ENCODE measurements at regions of chr12 and their contacts with region 1.

Region 1: GRCh38 chr12:53675651-53676453 is at the start of gene ATP5MC2:
- DNase-seq: peak; percentile 98 to 100
- ATAC-seq: peak; percentile 96
- H3K4me3 ChIP-seq: peak within 1 kb of the TSS; percentile 70
- H3K27ac ChIP-seq: peak within 1 kb of the TSS; percentile 91 to 94
- H3K4me1 ChIP-seq: peaks cover 19% of the 10 kb centered on the region; the same call in 2 of the 3 replicates
- CTCF ChIP-seq: peak; percentile 99
- EP300 ChIP-seq: no peak
- POLR2A ChIP-seq: peak; percentile 92
- RAD21 ChIP-seq: peak; percentile 91 to 94
- polyA plus RNA-seq, gene ATP5MC2: 402 and 678 TPM in 2 replicates

Region 2: GRCh38 chr12:53180220-53180930 is 495.5 kb before region 1 on chr12 and contains the starts of genes CSAD and ZNF740:
- CTCF ChIA-PET with region 1: no interaction called
- POLR2A ChIA-PET with region 1: no interaction called
- DNase-seq: peak; percentile 98 to 99
- ATAC-seq: peak; percentile 97 to 98
- H3K4me3 ChIP-seq: peak within 1 kb of the TSS; percentile 76
- H3K27ac ChIP-seq: peak within 1 kb of the TSS; percentile 92 to 93
- H3K4me1 ChIP-seq: peaks cover 39% of the 10 kb centered on the region
- CTCF ChIP-seq: no peak
- EP300 ChIP-seq: no peak; a peak in 1 of 5 replicates
- POLR2A ChIP-seq: peak; percentile 90
- RAD21 ChIP-seq: 0 out of 5 replicates have a peak, but pooled peaks of 1 of the 2 experiments have one; percentile 14
- polyA plus RNA-seq, gene CSAD: 16.5 and 19.2 TPM in 2 replicates
- polyA plus RNA-seq, gene ZNF740: 28.8 and 32.9 TPM in 2 replicates

Region 3: DNA sequence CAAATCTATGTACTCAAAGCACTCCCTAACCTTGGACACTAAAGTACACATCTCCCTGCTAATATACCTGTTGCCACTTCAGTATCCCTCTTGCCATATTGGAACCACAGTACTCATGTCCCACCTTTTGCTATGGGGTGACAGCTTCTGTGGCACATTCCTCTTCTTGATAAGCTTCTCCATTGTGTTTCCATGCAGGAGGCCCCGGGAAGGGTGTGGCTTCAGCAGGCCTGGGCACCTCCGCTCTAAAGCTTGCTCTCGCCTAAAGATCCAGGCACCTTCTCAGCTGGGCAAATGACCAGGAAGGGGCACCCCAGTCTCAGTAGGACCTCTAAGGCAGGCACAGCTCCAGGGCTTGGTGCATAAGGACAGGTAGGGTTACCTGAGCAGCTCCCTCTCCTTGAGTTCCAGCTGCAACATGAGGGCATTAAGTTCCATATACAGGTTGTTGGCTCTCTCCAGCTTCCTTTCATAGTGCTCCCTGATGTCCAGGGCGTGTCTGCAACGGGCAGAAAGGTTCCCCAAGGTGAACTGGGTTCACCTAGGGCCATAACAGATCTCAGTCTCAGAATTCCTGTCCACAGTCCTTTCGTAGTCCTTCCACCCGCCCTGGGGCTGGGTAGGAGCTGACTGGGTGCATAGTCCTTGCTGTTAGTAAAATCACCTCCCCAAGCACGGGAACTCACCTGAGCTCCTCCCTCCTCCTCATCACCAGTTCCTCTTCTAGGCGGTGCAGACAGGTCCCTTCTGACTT is 192.4 kb before region 1 on chr12:
- CTCF ChIA-PET with region 1: no interaction called
- POLR2A ChIA-PET with region 1: no interaction called
- DNase-seq: no peak
- ATAC-seq: peak; percentile 0 to 2; a peak in 3 of 6 replicates
- H3K4me3 ChIP-seq: no peak overlapping the region
- H3K27ac ChIP-seq: no peak overlapping the region
- H3K4me1 ChIP-seq: peaks cover 24% of the 10 kb centered on the region
- CTCF ChIP-seq: no peak
- EP300 ChIP-seq: no peak
- POLR2A ChIP-seq: no peak
- RAD21 ChIP-seq: no peak

Region 4: DNA sequence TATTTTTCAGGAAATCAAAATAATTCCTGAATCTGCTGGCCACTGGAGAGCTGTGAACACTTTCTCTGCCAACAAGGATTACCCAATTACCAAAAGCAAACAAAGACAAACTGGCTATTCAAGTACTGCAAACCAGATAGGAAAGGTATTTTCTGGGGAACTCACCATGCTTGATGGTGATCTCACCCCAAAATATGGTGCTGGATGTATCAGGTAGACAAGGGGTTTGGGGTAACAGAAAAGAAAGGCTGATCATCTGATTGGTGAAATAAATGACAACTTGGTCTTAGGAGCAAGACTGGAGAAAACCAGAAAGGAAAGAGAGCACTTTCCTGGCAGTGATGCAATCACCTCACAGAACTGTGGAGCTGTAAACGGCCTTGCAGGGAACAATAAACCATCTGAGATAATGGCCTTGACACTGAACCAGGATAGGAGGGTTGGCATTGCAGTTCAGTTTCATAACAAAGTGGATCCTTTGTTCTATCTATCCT is 137.6 kb before region 1 on chr12:
- CTCF ChIA-PET with region 1: interaction called, 148 read pairs
- POLR2A ChIA-PET with region 1: interaction called, 43 read pairs
- DNase-seq: peak in 1 of 2 experiments; percentile 42
- ATAC-seq: peak; percentile 62 to 65; a peak in 4 of 6 replicates
- H3K4me3 ChIP-seq: no peak overlapping the region
- H3K27ac ChIP-seq: peak overlapping the region; percentile 52 to 68; a peak in 5 of 6 replicates
- H3K4me1 ChIP-seq: peaks cover 15% of the 10 kb centered on the region
- CTCF ChIP-seq: no peak
- EP300 ChIP-seq: no peak
- POLR2A ChIP-seq: no peak
- RAD21 ChIP-seq: no peak

Region 5: DNA sequence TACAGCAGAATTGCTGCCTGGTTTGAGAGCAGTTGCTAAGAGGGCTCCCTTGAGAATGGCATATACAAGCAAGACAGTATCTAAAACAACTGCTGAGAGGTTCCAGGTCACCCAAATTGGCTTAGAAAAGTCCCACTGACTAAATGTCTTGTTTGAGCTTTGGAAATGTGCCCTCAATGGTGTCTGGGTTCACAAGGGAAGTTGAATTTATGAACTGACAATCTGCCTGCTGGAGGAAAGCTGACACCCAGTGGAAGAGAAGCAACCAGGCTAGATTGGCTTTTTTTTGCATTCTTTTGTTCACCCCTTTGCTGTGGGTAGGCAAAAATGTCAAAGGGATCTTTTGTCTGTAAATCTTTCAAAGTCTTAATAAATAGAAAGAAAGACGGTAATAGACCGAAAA is 124.0 kb before region 1 on chr12:
- CTCF ChIA-PET with region 1: interaction called, 148 read pairs
- POLR2A ChIA-PET with region 1: interaction called, 4 read pairs
- DNase-seq: no peak
- ATAC-seq: peak in 1 of 2 experiments; percentile 24; a peak in 1 of 6 replicates
- H3K4me3 ChIP-seq: no peak overlapping the region
- H3K27ac ChIP-seq: no peak overlapping the region
- H3K4me1 ChIP-seq: 0 out of 3 replicates have a peak, but pooled peaks cover 2% of the 10 kb centered on the region
- CTCF ChIP-seq: no peak
- EP300 ChIP-seq: no peak
- POLR2A ChIP-seq: no peak
- RAD21 ChIP-seq: no peak

Region 6: DNA sequence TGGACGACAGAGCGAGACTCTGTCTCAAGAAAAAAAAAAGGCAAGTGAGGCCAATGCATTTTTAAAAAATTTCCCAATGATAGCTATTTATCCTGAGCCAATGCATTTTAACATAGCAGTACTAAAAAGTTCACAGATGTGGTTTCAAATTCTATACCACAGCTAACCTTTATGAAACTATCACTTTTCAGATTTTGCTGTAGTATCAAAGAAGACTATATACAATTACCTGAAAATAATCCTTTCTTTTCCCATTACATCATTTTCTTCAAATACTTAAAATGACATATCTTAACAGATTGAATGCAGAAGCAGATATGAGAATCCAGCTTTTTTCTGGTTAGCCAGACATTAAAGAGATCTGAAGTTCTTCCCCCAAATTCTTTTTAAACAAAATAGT is 62.9 kb before region 1 on chr12:
- CTCF ChIA-PET with region 1: interaction called, 12 read pairs
- POLR2A ChIA-PET with region 1: no interaction called
- DNase-seq: no peak
- ATAC-seq: no peak
- H3K4me3 ChIP-seq: no peak overlapping the region
- H3K27ac ChIP-seq: no peak overlapping the region
- H3K4me1 ChIP-seq: peaks cover 10% of the 10 kb centered on the region; the same call in 1 of the 3 replicates
- CTCF ChIP-seq: no peak
- EP300 ChIP-seq: no peak
- POLR2A ChIP-seq: no peak
- RAD21 ChIP-seq: no peak

Region 7: GRCh38 chr12:53625946-53626701 is 49.7 kb before region 1 on chr12 and contains the start of gene ATF7:
- CTCF ChIA-PET with region 1: interaction called, 16 read pairs
- POLR2A ChIA-PET with region 1: interaction called, 14 read pairs
- DNase-seq: peak; percentile 97 to 99
- ATAC-seq: peak; percentile 98
- H3K4me3 ChIP-seq: peak within 1 kb of the TSS; percentile 67
- H3K27ac ChIP-seq: peak within 1 kb of the TSS; percentile 93 to 94
- H3K4me1 ChIP-seq: peaks cover 36% of the 10 kb centered on the region
- CTCF ChIP-seq: no peak
- EP300 ChIP-seq: no peak
- POLR2A ChIP-seq: peak; percentile 69
- RAD21 ChIP-seq: no peak; a peak in 2 of 5 replicates
- polyA plus RNA-seq, gene ATF7: 38.7 and 38.9 TPM in 2 replicates

Region 8: DNA sequence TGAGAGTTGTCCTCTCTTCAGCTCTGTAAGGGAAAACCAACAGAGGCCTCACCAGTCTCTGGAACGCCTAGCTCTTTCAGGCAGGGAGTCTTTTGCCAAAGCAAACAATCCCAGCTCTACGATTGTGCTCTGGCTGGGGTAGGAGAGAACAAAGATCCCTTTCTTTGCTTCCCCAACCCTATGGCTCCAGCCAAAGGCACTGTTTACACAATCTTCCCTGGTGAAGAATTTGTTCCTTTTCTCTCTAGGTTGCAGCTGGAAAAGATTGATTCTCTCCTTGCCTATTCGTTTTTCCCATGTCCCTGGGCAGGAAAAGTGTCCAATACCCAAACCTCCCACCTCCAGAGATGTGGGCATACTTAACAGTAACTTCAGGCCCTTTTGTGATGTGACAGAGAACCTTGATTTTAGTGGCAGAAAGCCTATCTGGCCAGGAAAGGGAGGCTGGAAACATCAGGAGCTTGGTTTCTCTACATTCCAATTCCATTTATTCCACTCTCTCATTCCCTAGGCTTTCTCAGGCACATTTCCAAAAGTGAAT is 16.8 kb before region 1 on chr12:
- CTCF ChIA-PET with region 1: interaction called, 9 read pairs
- POLR2A ChIA-PET with region 1: interaction called, 16 read pairs
- DNase-seq: peak; percentile 25 to 81
- ATAC-seq: peak; percentile 85 to 92
- H3K4me3 ChIP-seq: peak overlapping the region; percentile 19; the same call in 1 of the 3 replicates
- H3K27ac ChIP-seq: peak overlapping the region; percentile 85 to 86
- H3K4me1 ChIP-seq: peaks cover 36% of the 10 kb centered on the region
- CTCF ChIP-seq: no peak
- EP300 ChIP-seq: no peak
- POLR2A ChIP-seq: no peak
- RAD21 ChIP-seq: no peak

Region 9: GRCh38 chr12:53746592-53747092 is 70.8 kb after region 1 on chr12:
- CTCF ChIA-PET with region 1: interaction called, 13 read pairs
- POLR2A ChIA-PET with region 1: no interaction called
- DNase-seq: peak; percentile 88 to 91
- ATAC-seq: peak; percentile 92 to 95
- H3K4me3 ChIP-seq: no peak overlapping the region
- H3K27ac ChIP-seq: peak overlapping the region in 1 of 2 experiments; percentile 49; a peak in 1 of 6 replicates
- H3K4me1 ChIP-seq: no peaks in the 10 kb centered on the region
- CTCF ChIP-seq: peak; percentile 100
- EP300 ChIP-seq: no peak
- POLR2A ChIP-seq: no peak
- RAD21 ChIP-seq: peak; percentile 87 to 90

Region 10: GRCh38 chr12:53842686-53843085 is 166.8 kb after region 1 on chr12:
- CTCF ChIA-PET with region 1: no interaction called
- POLR2A ChIA-PET with region 1: no interaction called
- DNase-seq: no peak
- ATAC-seq: no peak
- H3K4me3 ChIP-seq: no peak overlapping the region
- H3K27ac ChIP-seq: peak overlapping the region in 1 of 2 experiments; percentile 13; a peak in 1 of 6 replicates
- H3K4me1 ChIP-seq: peaks cover 32% of the 10 kb centered on the region
- CTCF ChIP-seq: no peak
- EP300 ChIP-seq: no peak
- POLR2A ChIP-seq: no peak
- RAD21 ChIP-seq: no peak